CD8-positive, alpha-beta T cell (primary cell): ENCODE measurements at regions of chr5 and their contacts with region 1.

Region 1: DNA sequence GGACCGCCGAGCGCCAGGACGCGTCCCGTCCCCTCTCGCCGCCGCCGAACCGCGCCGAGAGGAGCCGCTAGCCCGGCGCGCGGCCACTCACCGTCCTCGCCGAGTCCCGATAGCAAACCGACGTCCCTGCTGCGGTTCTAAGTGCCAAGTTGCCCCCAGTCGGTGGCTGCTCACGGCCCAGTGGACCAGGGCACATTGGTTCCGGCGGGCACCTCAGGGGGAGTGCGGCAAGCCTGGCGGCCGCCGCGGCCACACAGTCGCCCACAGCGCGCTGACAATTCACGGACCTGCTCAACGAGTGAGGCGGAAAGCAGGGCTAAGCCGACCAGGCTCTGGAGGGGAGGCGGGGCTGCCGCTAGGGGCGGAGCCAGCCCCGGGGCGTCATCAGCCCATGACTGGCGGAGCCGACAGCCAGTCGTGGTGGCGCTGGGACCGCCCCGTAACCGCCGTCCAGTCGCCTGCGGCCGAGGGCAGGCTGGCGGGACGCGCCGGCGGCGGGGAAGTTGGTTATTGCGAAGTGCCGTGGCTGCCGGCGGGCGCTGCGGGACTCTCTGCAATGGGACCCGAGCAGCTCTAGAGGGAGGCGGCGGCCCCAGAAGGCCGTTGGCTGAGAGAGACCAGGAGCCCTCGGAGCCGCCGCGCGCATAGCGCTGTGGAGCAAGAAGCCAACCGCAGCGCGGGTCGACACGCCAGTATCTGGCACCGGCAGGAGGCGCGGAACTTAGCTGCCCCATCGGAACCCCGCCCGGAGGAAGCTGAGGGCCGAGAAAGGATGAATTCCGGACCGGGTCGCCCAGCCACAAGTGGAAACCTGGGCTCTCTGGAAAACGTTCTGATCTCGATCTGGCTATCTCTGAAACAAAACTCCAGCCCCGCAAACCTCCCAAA is at the start of gene MARCHF3:
- DNase-seq: peak; percentile 86 to 96 (median 92)
- ATAC-seq: peak; percentile 95
- H3K4me3 ChIP-seq: peak within 1 kb of the TSS; percentile 81 to 87
- H3K4me3 Mint-ChIP-seq: peak within 1 kb of the TSS; percentile 93
- H3K27ac ChIP-seq: peak within 1 kb of the TSS; percentile 49 to 54
- H3K27ac Mint-ChIP-seq: peak within 1 kb of the TSS; percentile 64
- H3K4me1 ChIP-seq: peaks cover 8% of the 10 kb centered on the region
- H3K4me1 Mint-ChIP-seq: peaks cover 25% of the 10 kb centered on the region
- H3K27me3 ChIP-seq: no peaks in the 10 kb centered on the region
- H3K27me3 Mint-ChIP-seq: peaks cover 7% of the 10 kb centered on the region
- CTCF ChIP-seq: no peak
- total RNA-seq, gene MARCHF3: 7.7 to 9.7 TPM

Region 2: DNA sequence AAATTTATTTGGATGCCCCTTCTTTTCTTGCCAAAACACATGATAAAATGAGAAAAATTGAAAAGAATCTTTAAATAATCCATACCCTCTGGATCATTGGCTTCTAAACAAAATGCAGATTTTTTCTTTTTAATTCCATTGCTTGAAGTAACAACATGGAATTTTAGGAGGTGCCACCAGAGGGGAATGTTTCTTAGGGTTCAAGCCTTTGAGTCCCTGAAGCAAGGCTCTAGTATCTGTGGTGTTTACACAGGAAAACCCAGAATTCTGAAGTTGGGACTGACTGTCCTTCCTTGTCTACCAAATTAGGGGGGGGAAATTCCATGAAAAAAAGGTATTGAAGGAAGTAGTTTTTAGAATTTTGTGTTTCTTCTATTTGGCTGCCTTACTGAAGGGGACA is 184.2 kb before region 1 on chr5:
- CTCF ChIA-PET with region 1: no interaction called
- POLR2A ChIA-PET with region 1: interaction called, 10 read pairs
- intact Hi-C with region 1: loop called in 1 of 2 experiments (anchors 5 kb)
- DNase-seq: no peak
- ATAC-seq: no peak
- H3K4me3 ChIP-seq: no peak overlapping the region
- H3K4me3 Mint-ChIP-seq: no peak overlapping the region
- H3K27ac ChIP-seq: peak overlapping the region in 1 of 2 experiments; percentile 63
- H3K27ac Mint-ChIP-seq: peak overlapping the region; percentile 95
- H3K4me1 ChIP-seq: peaks cover 19% of the 10 kb centered on the region
- H3K4me1 Mint-ChIP-seq: peaks cover 51% of the 10 kb centered on the region
- H3K27me3 ChIP-seq: no peaks in the 10 kb centered on the region
- H3K27me3 Mint-ChIP-seq: no peaks in the 10 kb centered on the region
- CTCF ChIP-seq: no peak

Region 3: DNA sequence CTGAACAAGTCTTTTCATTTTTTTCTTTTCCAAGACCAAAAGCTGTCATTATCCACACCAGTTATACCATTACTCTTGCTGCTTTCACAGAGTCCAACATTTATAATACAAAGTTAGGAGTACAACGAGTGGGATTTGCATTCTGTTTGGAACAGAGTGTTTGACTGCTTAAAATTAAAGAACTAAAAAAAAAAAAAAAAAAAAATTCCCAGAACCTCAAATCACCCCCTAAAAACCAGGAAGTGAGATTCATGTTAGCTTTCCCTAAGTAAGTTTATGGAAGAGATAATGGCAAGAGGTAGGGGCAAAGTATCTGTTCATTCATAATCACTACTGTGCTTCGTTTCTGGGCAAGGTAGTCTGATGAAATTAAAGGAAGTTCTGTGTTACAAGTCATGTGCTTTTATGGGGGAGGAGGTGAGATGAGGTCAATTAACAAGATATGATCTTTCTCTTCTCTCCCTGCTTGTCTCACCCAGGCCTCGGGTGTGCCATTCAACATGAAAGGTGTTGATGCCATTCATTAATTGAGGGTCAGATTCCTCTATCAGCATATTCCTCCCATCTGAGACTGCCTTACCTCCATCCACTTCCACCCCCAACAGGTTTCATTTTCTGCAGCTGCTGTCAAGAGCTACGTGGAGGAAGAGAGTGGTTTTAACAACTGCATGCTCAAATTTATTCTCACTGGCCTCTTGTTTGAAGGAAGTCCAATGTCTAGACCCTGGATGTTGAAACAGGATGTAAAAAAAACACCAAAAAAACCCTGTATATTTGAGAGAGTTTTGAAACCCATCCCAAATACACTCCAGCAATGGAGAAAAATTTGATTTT is 58.2 kb before region 1 on chr5:
- CTCF ChIA-PET with region 1: no interaction called
- POLR2A ChIA-PET with region 1: no interaction called
- intact Hi-C with region 1: loop called in 1 of 2 experiments (anchors 2 kb)
- DNase-seq: peak in 7 of 9 experiments; percentile 12 to 75 (median 38)
- ATAC-seq: peak; percentile 76
- H3K4me3 ChIP-seq: peak overlapping the region in 1 of 2 experiments; percentile 10
- H3K4me3 Mint-ChIP-seq: peak overlapping the region; percentile 76
- H3K27ac ChIP-seq: peak overlapping the region; percentile 8 to 66
- H3K27ac Mint-ChIP-seq: peak overlapping the region; percentile 86
- H3K4me1 ChIP-seq: peaks cover 23% of the 10 kb centered on the region
- H3K4me1 Mint-ChIP-seq: peaks cover 36% of the 10 kb centered on the region
- H3K27me3 ChIP-seq: no peaks in the 10 kb centered on the region
- H3K27me3 Mint-ChIP-seq: no peaks in the 10 kb centered on the region
- CTCF ChIP-seq: no peak

Region 4: DNA sequence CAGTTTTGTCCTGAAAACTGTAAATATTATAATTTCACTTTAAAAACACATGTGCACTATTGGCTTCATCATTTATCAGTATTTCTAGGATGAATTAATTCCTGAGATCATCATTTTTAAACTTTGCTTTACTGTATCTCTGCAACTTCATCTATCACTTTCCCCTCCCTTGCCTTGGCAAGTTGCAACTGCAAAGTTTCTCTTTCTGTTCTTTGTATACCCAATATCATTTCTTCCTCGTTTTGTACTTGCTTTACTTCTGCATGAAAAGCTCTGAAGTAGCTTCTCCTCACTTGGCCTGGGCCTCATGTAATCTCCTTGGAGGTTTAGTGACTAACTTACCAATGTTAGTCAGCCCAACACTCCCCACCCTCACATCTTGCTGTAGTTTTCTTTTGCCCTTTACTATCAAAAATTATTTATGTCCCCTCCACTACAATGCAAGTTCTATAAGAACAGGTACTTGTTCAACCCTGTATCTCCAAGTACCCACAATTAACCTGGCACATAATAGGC is 30.0 kb after region 1 on chr5:
- CTCF ChIA-PET with region 1: no interaction called
- POLR2A ChIA-PET with region 1: no interaction called
- intact Hi-C with region 1: no loop called
- DNase-seq: no peak
- ATAC-seq: no peak
- H3K4me3 ChIP-seq: no peak overlapping the region
- H3K4me3 Mint-ChIP-seq: no peak overlapping the region
- H3K27ac ChIP-seq: no peak overlapping the region
- H3K27ac Mint-ChIP-seq: peak overlapping the region; percentile 15
- H3K4me1 ChIP-seq: no peaks in the 10 kb centered on the region
- H3K4me1 Mint-ChIP-seq: peaks cover 3% of the 10 kb centered on the region
- H3K27me3 ChIP-seq: no peaks in the 10 kb centered on the region
- H3K27me3 Mint-ChIP-seq: no peaks in the 10 kb centered on the region
- CTCF ChIP-seq: no peak

Region 5: DNA sequence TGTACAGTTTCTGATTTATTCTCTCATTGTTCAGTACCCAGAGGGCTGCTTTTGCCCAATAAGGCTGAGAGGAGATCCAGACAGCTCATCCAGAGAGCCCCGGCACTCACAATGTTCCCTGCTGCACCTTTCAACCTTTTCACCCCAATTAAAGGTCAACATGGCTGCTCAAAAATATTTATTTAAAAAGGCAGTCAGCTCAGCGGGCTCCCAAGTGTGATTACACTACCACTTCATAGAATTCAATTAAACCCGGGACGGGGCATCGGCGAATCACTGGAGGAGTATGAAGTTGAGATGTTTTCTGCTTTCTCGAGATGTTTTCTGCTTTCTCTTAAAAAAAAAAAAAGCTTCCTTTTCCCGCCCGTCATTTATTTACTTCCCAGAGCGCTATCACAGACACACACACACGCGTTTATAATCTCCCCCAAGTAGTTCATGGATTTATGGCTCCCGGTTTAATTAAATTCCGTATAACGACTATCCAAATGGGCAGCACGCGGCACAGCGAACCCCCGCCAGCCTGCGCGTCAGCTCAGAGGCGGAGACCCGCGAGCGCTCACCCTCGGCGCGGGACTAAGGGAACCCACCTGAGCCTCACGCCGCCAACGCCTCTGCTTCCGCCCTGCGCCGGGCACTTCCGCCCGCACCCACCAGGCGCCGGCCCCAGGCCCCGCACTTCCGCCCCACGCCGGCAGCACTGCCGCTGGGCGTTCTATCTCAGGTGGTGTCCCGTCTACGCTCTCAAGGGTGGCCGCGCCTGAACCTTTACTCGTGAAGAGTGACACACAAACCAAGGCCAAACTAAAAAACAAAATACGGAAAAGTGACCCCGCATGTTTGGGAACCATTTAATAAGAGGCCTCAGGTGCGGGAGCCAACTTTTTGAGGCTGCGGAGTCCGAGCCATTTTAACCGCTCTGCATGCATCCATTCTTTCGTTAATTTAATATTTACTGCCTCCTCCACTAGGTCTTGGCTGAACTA is 42.7 kb after region 1 on chr5 and contains the start of gene C5orf63:
- CTCF ChIA-PET with region 1: interaction called, 5 read pairs
- POLR2A ChIA-PET with region 1: interaction called, 3 read pairs
- intact Hi-C with region 1: loop called (anchors 1 to 2 kb)
- DNase-seq: peak; percentile 45 to 84 (median 59)
- ATAC-seq: peak; percentile 93
- H3K4me3 ChIP-seq: peak within 1 kb of the TSS; percentile 67 to 73
- H3K4me3 Mint-ChIP-seq: peak within 1 kb of the TSS; percentile 89
- H3K27ac ChIP-seq: peak within 1 kb of the TSS; percentile 62 to 68
- H3K27ac Mint-ChIP-seq: peak within 1 kb of the TSS; percentile 96
- H3K4me1 ChIP-seq: peaks cover 5% of the 10 kb centered on the region
- H3K4me1 Mint-ChIP-seq: peaks cover 26% of the 10 kb centered on the region
- H3K27me3 ChIP-seq: no peaks in the 10 kb centered on the region
- H3K27me3 Mint-ChIP-seq: no peaks in the 10 kb centered on the region
- CTCF ChIP-seq: no peak
- total RNA-seq, gene C5orf63: 4.8 TPM

Region 6: GRCh38 chr5:127517480-127518318 is 487.2 kb after region 1 on chr5 and contains the start of gene PRRC1:
- CTCF ChIA-PET with region 1: no interaction called
- POLR2A ChIA-PET with region 1: no interaction called
- intact Hi-C with region 1: loop called (anchors 1 to 5 kb)
- DNase-seq: peak; percentile 53 to 90 (median 81)
- ATAC-seq: peak; percentile 96
- H3K4me3 ChIP-seq: peak within 1 kb of the TSS; percentile 91 to 98
- H3K4me3 Mint-ChIP-seq: peak within 1 kb of the TSS; percentile 90
- H3K27ac ChIP-seq: peak within 1 kb of the TSS; percentile 75 to 76
- H3K27ac Mint-ChIP-seq: peak within 1 kb of the TSS; percentile 80
- H3K4me1 ChIP-seq: peaks cover 11% of the 10 kb centered on the region
- H3K4me1 Mint-ChIP-seq: peaks cover 37% of the 10 kb centered on the region
- H3K27me3 ChIP-seq: no peaks in the 10 kb centered on the region
- H3K27me3 Mint-ChIP-seq: peaks cover 8% of the 10 kb centered on the region
- CTCF ChIP-seq: no peak
- total RNA-seq, gene PRRC1: 30.4 to 37.3 TPM

Region 7: GRCh38 chr5:128949847-128950537 is 1919.5 kb after region 1 on chr5:
- CTCF ChIA-PET with region 1: no interaction called
- POLR2A ChIA-PET with region 1: no interaction called
- intact Hi-C with region 1: no loop called
- DNase-seq: no peak
- ATAC-seq: no peak
- H3K4me3 ChIP-seq: no peak overlapping the region
- H3K4me3 Mint-ChIP-seq: no peak overlapping the region
- H3K27ac ChIP-seq: no peak overlapping the region
- H3K27ac Mint-ChIP-seq: no peak overlapping the region
- H3K4me1 ChIP-seq: no peaks in the 10 kb centered on the region
- H3K4me1 Mint-ChIP-seq: no peaks in the 10 kb centered on the region
- H3K27me3 ChIP-seq: no peaks in the 10 kb centered on the region
- H3K27me3 Mint-ChIP-seq: peaks cover 6% of the 10 kb centered on the region
- CTCF ChIP-seq: no peak